HEK293T (cell line): ENCODE measurements at regions of chr18 and their contacts with region 1.

Region 1: GRCh38 chr18:23134780-23135549 is at the start of gene CABLES1:
- DNase-seq: peak; percentile 75

Region 2: DNA sequence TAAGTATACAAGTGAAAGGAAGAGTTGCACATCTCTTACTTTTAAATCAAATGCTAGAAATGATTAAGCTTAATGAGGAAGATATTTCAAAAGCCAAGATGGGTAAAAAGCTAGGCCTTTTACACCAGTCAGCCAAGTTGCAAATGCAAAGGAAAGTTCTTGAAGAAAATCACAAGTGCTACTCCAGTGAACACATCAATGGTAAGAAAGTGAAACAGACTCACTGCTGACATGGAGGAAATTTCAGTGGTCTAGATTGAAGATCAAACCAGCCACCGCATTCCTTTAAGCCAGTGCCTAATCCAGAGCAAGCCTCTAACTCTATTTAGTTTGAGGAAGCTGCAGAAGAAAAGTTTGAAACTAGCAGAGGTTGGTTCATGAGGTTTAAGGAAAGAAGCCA is 122.7 kb before region 1 on chr18:
- CTCF ChIA-PET with region 1: no interaction called
- POLR2A ChIA-PET with region 1: no interaction called
- DNase-seq: no peak

Region 3: DNA sequence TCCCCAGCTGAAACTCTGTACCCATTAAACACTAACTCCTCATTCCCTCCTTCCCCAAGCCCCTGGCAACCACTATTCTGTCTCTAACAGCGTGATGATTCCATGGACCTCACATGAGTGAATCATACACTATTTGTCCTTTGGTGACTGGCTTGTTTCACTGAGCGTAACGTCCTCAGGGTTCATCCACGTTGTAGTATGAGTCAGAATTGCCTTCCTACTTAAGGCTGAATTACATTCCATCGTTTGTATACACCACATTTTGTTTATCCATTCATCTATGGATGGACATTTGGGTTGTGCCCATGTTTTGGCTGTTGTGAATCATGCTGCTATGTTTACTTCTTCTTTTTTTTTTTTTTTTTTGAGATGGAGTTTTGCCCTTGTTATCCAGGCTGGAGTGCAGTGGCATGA is 19.3 kb before region 1 on chr18:
- CTCF ChIA-PET with region 1: interaction called, 6 read pairs
- POLR2A ChIA-PET with region 1: interaction called, 11 read pairs
- DNase-seq: no peak

Region 4: DNA sequence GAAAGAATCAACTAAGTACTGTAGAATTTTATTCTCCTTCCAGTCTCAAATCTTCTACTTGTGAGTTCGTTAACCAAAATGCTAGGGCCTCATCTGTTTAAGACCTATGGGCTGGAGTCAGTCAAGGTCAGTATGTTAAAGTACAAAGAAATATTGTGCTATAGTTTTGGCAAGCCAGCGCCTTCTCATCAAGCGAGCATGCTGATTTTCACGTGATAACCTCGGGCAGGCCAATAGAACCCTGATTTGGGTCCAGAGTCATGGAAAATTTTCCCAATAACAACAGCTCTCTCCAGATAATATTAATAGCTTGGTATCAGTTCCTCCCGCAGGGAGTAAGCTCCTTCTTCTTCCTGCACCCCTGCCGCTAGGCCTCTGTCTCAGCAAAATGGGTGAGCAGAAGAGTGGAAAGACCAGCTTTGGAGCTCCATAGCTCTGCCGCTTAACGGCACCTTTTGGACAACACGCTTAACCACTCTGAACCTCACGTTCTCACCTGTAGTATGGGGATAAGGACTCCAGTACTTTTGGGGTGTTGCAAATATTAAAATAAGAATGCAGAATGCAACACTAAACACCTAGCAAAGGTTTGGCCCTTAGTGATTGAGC is 12.0 kb after region 1 on chr18:
- CTCF ChIA-PET with region 1: interaction called, 7 read pairs
- POLR2A ChIA-PET with region 1: interaction called, 26 read pairs
- DNase-seq: no peak

Region 5: GRCh38 chr18:23377669-23378301 is 242.8 kb after region 1 on chr18:
- CTCF ChIA-PET with region 1: interaction called, 12 read pairs
- POLR2A ChIA-PET with region 1: no interaction called
- DNase-seq: no peak